B cell (primary cell): ENCODE measurements at regions of chr6 and their contacts with region 1.

Region 1: GRCh38 chr6:150004783-150005717 is 20.3 kb downstream of the RAET1L start:
- DNase-seq: peak; percentile 93
- ATAC-seq: peak; percentile 81
- H3K4me3 ChIP-seq: peak overlapping the region; percentile 25 to 86 (median 69)
- H3K4me3 Mint-ChIP-seq: peak overlapping the region; percentile 96
- H3K27ac ChIP-seq: peak overlapping the region; percentile 93 to 97
- H3K27ac Mint-ChIP-seq: peak overlapping the region; percentile 97
- H3K4me1 ChIP-seq: peaks cover 16 to 28% of the 10 kb centered on the region in 2 donors
- H3K4me1 Mint-ChIP-seq: peaks cover 32% of the 10 kb centered on the region
- H3K27me3 ChIP-seq: peaks cover 0 to 32% (median 10%) of the 10 kb centered on the region in 4 experiments
- H3K27me3 Mint-ChIP-seq: peaks cover 13% of the 10 kb centered on the region
- CTCF ChIP-seq: no peak

Region 2: DNA sequence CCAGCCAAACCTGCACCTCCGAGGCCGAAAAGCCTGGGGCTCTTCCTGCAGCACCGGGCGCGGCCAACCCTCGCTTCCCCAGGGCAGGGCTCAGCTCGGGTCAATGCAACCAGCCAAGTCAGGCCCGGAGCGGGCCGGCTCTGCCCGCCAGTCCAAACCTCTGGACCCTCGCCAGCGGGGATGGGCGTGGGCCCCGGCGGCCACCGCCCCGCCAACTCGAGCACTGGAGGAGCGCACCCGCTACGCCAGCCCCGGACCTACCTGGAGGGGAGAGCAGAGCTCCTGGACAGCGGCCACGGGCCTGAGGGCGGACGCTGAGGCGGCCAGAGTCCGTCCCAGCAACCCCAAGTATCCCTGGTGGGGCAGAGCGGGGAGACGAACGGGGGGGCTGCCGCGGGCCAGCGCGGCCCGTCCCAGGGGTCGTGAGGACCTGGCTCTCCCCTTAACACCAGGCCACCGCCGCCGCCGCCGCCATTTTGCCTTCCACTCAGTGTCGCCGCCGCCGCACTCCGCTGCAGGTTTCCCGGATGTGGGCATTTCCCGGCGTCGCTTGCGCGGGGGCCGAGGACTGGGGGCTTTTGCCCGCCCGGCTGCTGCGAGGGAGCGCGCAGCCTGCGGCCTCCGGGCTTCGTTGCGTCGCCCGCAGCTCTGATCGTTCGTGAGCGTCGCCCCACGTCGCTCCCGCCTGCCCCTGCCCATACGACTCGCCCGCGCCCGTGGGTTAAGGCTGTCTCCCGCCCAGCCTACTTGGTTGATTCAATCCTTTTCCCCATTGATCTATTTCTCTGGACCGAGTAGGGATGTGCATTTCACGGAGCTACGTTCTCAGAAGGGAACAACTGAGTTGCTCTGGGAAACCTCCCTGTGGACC is 287.2 kb before region 1 on chr6 and contains the start of gene LATS1:
- CTCF ChIA-PET with region 1: no interaction called
- POLR2A ChIA-PET with region 1: no interaction called
- intact Hi-C with region 1: loop called (anchors 1 kb)
- DNase-seq: peak; percentile 91
- ATAC-seq: peak; percentile 92
- H3K4me3 ChIP-seq: peak within 1 kb of the TSS; percentile 80 to 92 (median 86)
- H3K4me3 Mint-ChIP-seq: peak within 1 kb of the TSS; percentile 91
- H3K27ac ChIP-seq: peak within 1 kb of the TSS; percentile 79 to 92
- H3K27ac Mint-ChIP-seq: peak within 1 kb of the TSS; percentile 95
- H3K4me1 ChIP-seq: peaks cover 23% of the 10 kb centered on the region in 2 donors
- H3K4me1 Mint-ChIP-seq: peaks cover 33% of the 10 kb centered on the region
- H3K27me3 ChIP-seq: no peaks in the 10 kb centered on the region
- H3K27me3 Mint-ChIP-seq: no peaks in the 10 kb centered on the region
- CTCF ChIP-seq: no peak
- total RNA-seq, gene LATS1: 48.0 and 54.0 TPM in 2 replicates

Region 3: GRCh38 chr6:149934249-149935156 is 70.5 kb before region 1 on chr6:
- CTCF ChIA-PET with region 1: interaction called, 12 read pairs
- POLR2A ChIA-PET with region 1: no interaction called
- intact Hi-C with region 1: no loop called
- DNase-seq: peak; percentile 86
- ATAC-seq: peak; percentile 44
- H3K4me3 ChIP-seq: no peak overlapping the region
- H3K4me3 Mint-ChIP-seq: no peak overlapping the region
- H3K27ac ChIP-seq: no peak overlapping the region
- H3K27ac Mint-ChIP-seq: no peak overlapping the region
- H3K4me1 ChIP-seq: peaks cover 16 to 24% of the 10 kb centered on the region in 2 donors
- H3K4me1 Mint-ChIP-seq: peaks cover 19% of the 10 kb centered on the region
- H3K27me3 ChIP-seq: peaks cover 2 to 72% (median 64%) of the 10 kb centered on the region in 4 experiments
- H3K27me3 Mint-ChIP-seq: peaks cover 80% of the 10 kb centered on the region
- CTCF ChIP-seq: peak; percentile 84

Region 4: GRCh38 chr6:149963462-149964307 is 41.4 kb before region 1 on chr6 and contains the start of gene ULBP1:
- CTCF ChIA-PET with region 1: no interaction called
- POLR2A ChIA-PET with region 1: no interaction called
- intact Hi-C with region 1: loop called (anchors 1 kb)
- DNase-seq: peak; percentile 86
- ATAC-seq: peak; percentile 77
- H3K4me3 ChIP-seq: peak within 1 kb of the TSS; percentile 31 to 66 (median 53)
- H3K4me3 Mint-ChIP-seq: peak within 1 kb of the TSS; percentile 95
- H3K27ac ChIP-seq: no peak within 1 kb of the TSS
- H3K27ac Mint-ChIP-seq: peak within 1 kb of the TSS; percentile 67
- H3K4me1 ChIP-seq: peaks cover 28 to 30% of the 10 kb centered on the region in 2 donors
- H3K4me1 Mint-ChIP-seq: peaks cover 29% of the 10 kb centered on the region
- H3K27me3 ChIP-seq: peaks cover 0 to 79% (median 35%) of the 10 kb centered on the region in 4 experiments
- H3K27me3 Mint-ChIP-seq: peaks cover 86% of the 10 kb centered on the region
- CTCF ChIP-seq: no peak
- total RNA-seq, gene ULBP1: 0.12 and 0.19 TPM in 2 replicates

Region 5: GRCh38 chr6:149990618-149991471 is 14.2 kb before region 1 on chr6:
- CTCF ChIA-PET with region 1: interaction called, 6 read pairs
- POLR2A ChIA-PET with region 1: no interaction called
- intact Hi-C with region 1: loop called (anchors 2 kb)
- DNase-seq: peak; percentile 76
- ATAC-seq: peak; percentile 60
- H3K4me3 ChIP-seq: peak overlapping the region; percentile 6 to 68 (median 55)
- H3K4me3 Mint-ChIP-seq: peak overlapping the region; percentile 90
- H3K27ac ChIP-seq: no peak overlapping the region
- H3K27ac Mint-ChIP-seq: peak overlapping the region; percentile 46
- H3K4me1 ChIP-seq: peaks cover 29 to 38% of the 10 kb centered on the region in 2 donors
- H3K4me1 Mint-ChIP-seq: peaks cover 31% of the 10 kb centered on the region
- H3K27me3 ChIP-seq: peaks cover 0 to 84% (median 63%) of the 10 kb centered on the region in 4 experiments
- H3K27me3 Mint-ChIP-seq: peaks cover 73% of the 10 kb centered on the region
- CTCF ChIP-seq: no peak

Region 6: GRCh38 chr6:150068720-150069648 is 63.9 kb after region 1 on chr6 and contains the start of gene ULBP3:
- CTCF ChIA-PET with region 1: no interaction called
- POLR2A ChIA-PET with region 1: no interaction called
- intact Hi-C with region 1: loop called (anchors 1 kb)
- DNase-seq: peak; percentile 80
- ATAC-seq: peak; percentile 90
- H3K4me3 ChIP-seq: peak within 1 kb of the TSS; percentile 11 to 71 (median 70)
- H3K4me3 Mint-ChIP-seq: peak within 1 kb of the TSS; percentile 87
- H3K27ac ChIP-seq: no peak within 1 kb of the TSS
- H3K27ac Mint-ChIP-seq: peak within 1 kb of the TSS; percentile 38
- H3K4me1 ChIP-seq: peaks cover 5 to 18% of the 10 kb centered on the region in 2 donors
- H3K4me1 Mint-ChIP-seq: peaks cover 23% of the 10 kb centered on the region
- H3K27me3 ChIP-seq: peaks cover 0 to 22% (median 4%) of the 10 kb centered on the region in 4 experiments
- H3K27me3 Mint-ChIP-seq: peaks cover 18% of the 10 kb centered on the region
- CTCF ChIP-seq: peak; percentile 50
- total RNA-seq, gene ULBP3: 0.61 and 0.69 TPM in 2 replicates

Region 7: GRCh38 chr6:150184850-150185731 is 180.0 kb after region 1 on chr6:
- CTCF ChIA-PET with region 1: no interaction called
- POLR2A ChIA-PET with region 1: no interaction called
- intact Hi-C with region 1: no loop called
- DNase-seq: peak; percentile 49
- ATAC-seq: peak; percentile 53
- H3K4me3 ChIP-seq: peak overlapping the region in 1 of 5 experiments; percentile 6
- H3K4me3 Mint-ChIP-seq: peak overlapping the region; percentile 42
- H3K27ac ChIP-seq: peak overlapping the region; percentile 2 to 53
- H3K27ac Mint-ChIP-seq: peak overlapping the region; percentile 83
- H3K4me1 ChIP-seq: peaks cover 38 to 40% of the 10 kb centered on the region in 2 donors
- H3K4me1 Mint-ChIP-seq: peaks cover 43% of the 10 kb centered on the region
- H3K27me3 ChIP-seq: no peaks in the 10 kb centered on the region
- H3K27me3 Mint-ChIP-seq: no peaks in the 10 kb centered on the region
- CTCF ChIP-seq: no peak

Region 8: GRCh38 chr6:151087861-151088598 is 1083.0 kb after region 1 on chr6:
- CTCF ChIA-PET with region 1: no interaction called
- POLR2A ChIA-PET with region 1: no interaction called
- intact Hi-C with region 1: no loop called
- DNase-seq: no peak
- ATAC-seq: no peak
- H3K4me3 ChIP-seq: no peak overlapping the region
- H3K4me3 Mint-ChIP-seq: no peak overlapping the region
- H3K27ac ChIP-seq: no peak overlapping the region
- H3K27ac Mint-ChIP-seq: no peak overlapping the region
- H3K4me1 ChIP-seq: no peaks in the 10 kb centered on the region
- H3K4me1 Mint-ChIP-seq: peaks cover 2% of the 10 kb centered on the region
- H3K27me3 ChIP-seq: no peaks in the 10 kb centered on the region
- H3K27me3 Mint-ChIP-seq: no peaks in the 10 kb centered on the region
- CTCF ChIP-seq: no peak

Region 9: GRCh38 chr6:151390276-151391032 is 1385.4 kb after region 1 on chr6:
- CTCF ChIA-PET with region 1: no interaction called
- POLR2A ChIA-PET with region 1: no interaction called
- intact Hi-C with region 1: loop called (anchors 10 kb)
- DNase-seq: peak; percentile 100
- ATAC-seq: peak; percentile 73
- H3K4me3 ChIP-seq: peak overlapping the region in 4 of 5 experiments; percentile 67 to 95 (median 82)
- H3K4me3 Mint-ChIP-seq: peak overlapping the region; percentile 99
- H3K27ac ChIP-seq: peak overlapping the region; percentile 77 to 97
- H3K27ac Mint-ChIP-seq: peak overlapping the region; percentile 98
- H3K4me1 ChIP-seq: peaks cover 38 to 39% of the 10 kb centered on the region in 2 donors
- H3K4me1 Mint-ChIP-seq: peaks cover 46% of the 10 kb centered on the region
- H3K27me3 ChIP-seq: no peaks in the 10 kb centered on the region
- H3K27me3 Mint-ChIP-seq: no peaks in the 10 kb centered on the region
- CTCF ChIP-seq: no peak